Uterus (tissue), 4 donors: ENCODE measurements at regions of chr19 and their contacts with region 1.

Region 1: DNA sequence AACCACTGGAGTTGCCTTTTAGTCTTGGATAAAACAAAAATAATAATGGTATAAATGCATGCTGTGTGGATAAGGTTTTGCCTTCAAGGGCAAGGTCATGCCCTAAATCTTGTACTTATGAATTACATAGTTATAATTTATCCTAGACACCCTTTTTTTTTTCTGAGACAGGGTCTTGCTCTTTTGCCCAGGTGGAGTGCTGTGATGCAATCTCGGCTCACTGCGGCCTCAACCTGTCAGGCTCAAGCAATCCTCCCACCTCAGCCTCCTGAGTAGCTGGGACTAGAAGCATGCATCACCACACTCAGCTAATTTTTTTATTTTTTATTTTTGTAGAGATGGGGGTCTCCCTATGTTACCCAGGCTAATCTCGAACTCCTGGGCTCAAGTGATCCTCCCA is 7.7 kb upstream of the DACT3 start:
- DNase-seq: no peak
- H3K4me3 ChIP-seq: no peak overlapping the region
- H3K27ac ChIP-seq: no peak overlapping the region
- H3K4me1 ChIP-seq: no peaks in the 10 kb centered on the region
- H3K27me3 ChIP-seq: no peaks in the 10 kb centered on the region
- CTCF ChIP-seq: no peak
- POLR2A ChIP-seq: no peak

Region 2: DNA sequence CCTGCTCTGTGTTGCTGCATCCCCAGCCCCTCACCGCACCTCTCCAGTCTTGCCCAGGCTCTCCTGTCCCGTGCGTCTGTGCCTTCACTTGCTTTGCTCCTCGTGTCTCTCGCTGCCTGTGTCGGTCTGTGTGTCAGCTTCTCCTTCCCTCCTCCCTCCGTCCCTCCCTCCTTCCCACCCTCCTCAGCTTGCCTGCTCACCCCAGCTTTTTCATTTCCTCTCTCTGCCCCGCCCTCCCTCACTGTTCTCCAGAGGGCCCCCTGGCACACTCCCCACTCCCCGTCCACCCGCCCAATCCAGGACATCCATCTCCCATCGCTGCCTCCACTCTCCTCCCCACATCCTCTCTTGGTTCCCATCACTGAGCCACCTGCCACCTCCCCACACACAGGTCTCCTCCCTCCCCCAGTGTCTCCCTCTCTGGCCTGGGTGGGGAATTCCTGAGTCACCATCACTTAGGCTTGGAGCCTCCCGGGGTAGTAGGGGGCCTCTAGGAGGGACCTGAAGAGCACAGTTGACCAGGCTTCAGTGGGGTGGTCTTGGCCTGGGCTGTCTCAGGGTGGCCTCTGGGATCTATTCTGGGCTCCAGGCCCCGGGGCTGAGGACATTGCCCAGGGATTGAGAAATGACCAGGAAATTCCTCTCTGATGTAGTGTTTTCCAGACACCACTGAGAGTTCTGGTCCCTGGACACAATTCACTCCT is 43.6 kb before region 1 on chr19 and contains the start of gene PTGIR:
- intact Hi-C with region 1: loop called (anchors 5 kb)
- DNase-seq: peak; percentile 84 to 88
- H3K4me3 ChIP-seq: no peak within 1 kb of the TSS
- H3K27ac ChIP-seq: peak within 1 kb of the TSS; percentile 81 to 89
- H3K4me1 ChIP-seq: peaks cover 5 to 7% of the 10 kb centered on the region in 2 donors
- H3K27me3 ChIP-seq: no peaks in the 10 kb centered on the region
- CTCF ChIP-seq: no peak
- POLR2A ChIP-seq: peak in 1 of 2 donors; percentile 14
- total RNA-seq, gene PTGIR: 0.51 to 6.1 (median 3.5) TPM